PC-3 (cell line): ENCODE measurements at regions of chr15 and their contacts with region 1.

Region 1: GRCh38 chr15:30030350-30030749 is 52.4 kb upstream of the GOLGA8J start:
- DNase-seq: peak; percentile 72
- ATAC-seq: peak; percentile 72
- H3K4me3 ChIP-seq: no peak overlapping the region
- H3K27ac ChIP-seq: no peak overlapping the region
- H3K4me1 ChIP-seq: no peaks in the 10 kb centered on the region
- H3K27me3 ChIP-seq: no peaks in the 10 kb centered on the region
- CTCF ChIP-seq: peak; percentile 88

Region 2: GRCh38 chr15:29747837-29748417 is 282.4 kb before region 1 on chr15:
- CTCF ChIA-PET with region 1: interaction called, 3 read pairs
- POLR2A ChIA-PET with region 1: no interaction called
- intact Hi-C with region 1: loop called (anchors 1 kb)
- DNase-seq: peak; percentile 64
- ATAC-seq: peak; percentile 42; the same call in 1 of the 2 replicates
- H3K4me3 ChIP-seq: no peak overlapping the region
- H3K27ac ChIP-seq: no peak overlapping the region
- H3K4me1 ChIP-seq: no peaks in the 10 kb centered on the region
- H3K27me3 ChIP-seq: no peaks in the 10 kb centered on the region
- CTCF ChIP-seq: peak; percentile 71

Region 3: GRCh38 chr15:29942143-29942542 is 88.2 kb before region 1 on chr15:
- CTCF ChIA-PET with region 1: no interaction called
- POLR2A ChIA-PET with region 1: no interaction called
- intact Hi-C with region 1: loop called (anchors 1 kb)
- DNase-seq: peak; percentile 35
- ATAC-seq: no peak
- H3K4me3 ChIP-seq: no peak overlapping the region
- H3K27ac ChIP-seq: no peak overlapping the region
- H3K4me1 ChIP-seq: peaks cover 21% of the 10 kb centered on the region
- H3K27me3 ChIP-seq: no peaks in the 10 kb centered on the region
- CTCF ChIP-seq: peak; percentile 62